Gastrocnemius medialis (tissue), 4 donors: ENCODE measurements at regions of chr16 and their contacts with region 1.

Region 1: DNA sequence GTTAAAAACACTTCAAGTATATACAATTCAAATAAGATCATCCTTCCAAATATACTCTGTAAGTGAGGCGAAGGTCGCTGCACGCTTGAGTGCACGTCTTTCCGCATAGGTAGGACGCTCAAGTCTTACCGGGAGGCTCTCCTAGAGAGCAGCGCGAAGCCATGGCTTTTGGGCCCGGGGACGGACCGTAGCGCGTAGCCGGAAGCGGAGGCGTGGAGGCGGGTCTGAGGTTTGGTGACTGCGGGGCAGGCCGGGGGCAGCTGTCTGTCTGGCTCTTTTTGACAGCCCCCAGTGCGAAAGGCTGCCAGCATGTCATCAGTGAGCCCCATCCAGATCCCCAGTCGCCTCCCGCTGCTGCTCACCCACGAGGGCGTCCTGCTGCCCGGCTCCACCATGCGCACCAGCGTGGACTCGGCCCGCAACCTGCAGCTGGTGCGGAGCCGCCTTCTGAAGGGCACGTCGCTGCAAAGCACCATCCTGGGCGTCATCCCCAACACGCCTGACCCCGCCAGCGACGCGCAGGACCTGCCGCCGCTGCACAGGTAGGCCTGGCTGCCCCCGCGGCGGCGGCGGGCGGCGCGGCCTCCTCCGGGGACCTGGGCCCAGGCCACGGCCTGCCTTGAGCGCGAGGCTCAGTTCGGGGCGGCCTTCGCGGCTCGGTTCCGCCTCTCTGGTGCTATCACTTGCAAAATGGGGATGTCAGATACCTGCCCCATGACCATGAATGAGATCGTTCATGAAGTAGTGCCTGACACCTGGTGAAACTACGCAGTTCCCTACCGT is at the start of gene LONP2:
- DNase-seq: peak; percentile 82 to 86
- ATAC-seq: peak; percentile 96 to 98
- H3K4me3 ChIP-seq: peak within 1 kb of the TSS; percentile 72 to 93 (median 92)
- H3K27ac ChIP-seq: peak within 1 kb of the TSS; percentile 80 to 95 (median 93)
- H3K4me1 ChIP-seq: peaks cover 28 to 36% of the 10 kb centered on the region in 2 donors
- H3K27me3 ChIP-seq: no peaks in the 10 kb centered on the region
- CTCF ChIP-seq: no peak
- POLR2A ChIP-seq: peak; percentile 50 to 69
- total RNA-seq, gene LONP2: 33.8 to 45.2 (median 42.4) TPM

Region 2: DNA sequence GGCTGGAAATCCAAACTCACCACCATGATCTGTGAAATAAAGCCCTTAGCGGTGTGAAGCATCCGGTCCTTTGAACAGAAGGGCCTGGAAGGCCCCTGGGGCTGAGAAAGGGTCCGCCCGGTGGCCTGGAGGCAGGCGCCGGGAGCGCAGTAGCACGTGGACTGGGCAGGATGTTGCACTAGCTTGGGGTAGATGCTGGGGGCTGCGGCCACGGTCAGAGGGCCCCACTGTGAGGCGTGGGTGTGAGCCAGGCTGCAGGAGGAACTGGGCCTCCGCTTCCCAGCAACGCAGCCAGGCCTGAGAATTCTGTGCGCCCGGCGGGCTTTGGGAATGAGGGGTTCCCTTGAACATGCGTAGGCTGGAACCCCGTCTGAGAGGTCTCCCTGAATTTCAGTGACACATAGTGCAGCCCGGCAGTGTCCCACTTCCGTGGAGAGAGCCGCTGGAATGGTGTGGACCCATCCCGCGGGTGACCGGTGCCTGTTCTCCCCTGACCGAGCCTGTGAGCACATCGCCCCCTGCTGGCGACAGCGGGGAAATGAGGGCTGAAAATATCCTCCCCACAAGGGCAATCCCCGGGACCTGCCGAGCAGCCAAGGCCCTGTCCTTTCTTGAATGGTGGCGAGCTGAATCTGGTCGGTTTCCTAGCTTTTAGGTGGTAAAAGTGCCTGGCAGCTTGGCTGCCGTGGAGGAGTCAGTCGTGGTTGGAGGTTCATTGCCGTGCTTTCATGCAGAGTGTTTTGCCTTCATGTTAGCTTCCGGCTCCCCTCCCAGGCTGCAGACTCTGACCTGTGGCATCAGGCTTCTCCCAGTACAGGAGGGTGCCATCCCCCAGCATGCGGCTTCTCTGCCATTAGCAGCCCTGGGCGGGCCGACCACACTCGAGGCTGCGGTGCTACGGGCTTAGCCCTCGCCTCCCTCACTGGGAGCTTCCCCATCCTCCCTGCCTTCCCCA is 1314.6 kb before region 1 on chr16:
- in situ Hi-C with region 1: no loop called
- intact Hi-C with region 1: loop called (anchors 10 kb)
- DNase-seq: peak; percentile 34 to 68
- ATAC-seq: peak; percentile 34 to 74
- H3K4me3 ChIP-seq: no peak overlapping the region
- H3K27ac ChIP-seq: peak overlapping the region in 3 of 4 donors; percentile 7 to 58 (median 35)
- H3K4me1 ChIP-seq: peaks cover 10 to 22% of the 10 kb centered on the region in 2 donors
- H3K27me3 ChIP-seq: no peaks in the 10 kb centered on the region
- CTCF ChIP-seq: peak; percentile 61 to 88 (median 83)
- POLR2A ChIP-seq: no peak

Region 3: GRCh38 chr16:48081656-48082055 is 162.6 kb before region 1 on chr16:
- in situ Hi-C with region 1: no loop called
- intact Hi-C with region 1: no loop called
- DNase-seq: no peak
- ATAC-seq: no peak
- H3K4me3 ChIP-seq: no peak overlapping the region
- H3K27ac ChIP-seq: no peak overlapping the region
- H3K4me1 ChIP-seq: peaks cover 14 to 15% of the 10 kb centered on the region in 2 donors
- H3K27me3 ChIP-seq: no peaks in the 10 kb centered on the region
- CTCF ChIP-seq: no peak
- POLR2A ChIP-seq: no peak

Region 4: GRCh38 chr16:48385272-48386150 is 141.2 kb after region 1 on chr16 and contains the start of gene SIAH1:
- in situ Hi-C with region 1: no loop called
- intact Hi-C with region 1: loop called (anchors 5 kb)
- DNase-seq: peak; percentile 69 to 82
- ATAC-seq: peak; percentile 76 to 78
- H3K4me3 ChIP-seq: peak within 1 kb of the TSS; percentile 77 to 89 (median 79)
- H3K27ac ChIP-seq: peak within 1 kb of the TSS; percentile 94 to 99 (median 98)
- H3K4me1 ChIP-seq: peaks cover 28 to 36% of the 10 kb centered on the region in 2 donors
- H3K27me3 ChIP-seq: no peaks in the 10 kb centered on the region
- CTCF ChIP-seq: peak in 2 of 5 experiments; percentile 6 to 16
- POLR2A ChIP-seq: peak; percentile 96 to 97
- total RNA-seq, gene SIAH1: 19.9 to 21.0 (median 20.1) TPM

Region 5: DNA sequence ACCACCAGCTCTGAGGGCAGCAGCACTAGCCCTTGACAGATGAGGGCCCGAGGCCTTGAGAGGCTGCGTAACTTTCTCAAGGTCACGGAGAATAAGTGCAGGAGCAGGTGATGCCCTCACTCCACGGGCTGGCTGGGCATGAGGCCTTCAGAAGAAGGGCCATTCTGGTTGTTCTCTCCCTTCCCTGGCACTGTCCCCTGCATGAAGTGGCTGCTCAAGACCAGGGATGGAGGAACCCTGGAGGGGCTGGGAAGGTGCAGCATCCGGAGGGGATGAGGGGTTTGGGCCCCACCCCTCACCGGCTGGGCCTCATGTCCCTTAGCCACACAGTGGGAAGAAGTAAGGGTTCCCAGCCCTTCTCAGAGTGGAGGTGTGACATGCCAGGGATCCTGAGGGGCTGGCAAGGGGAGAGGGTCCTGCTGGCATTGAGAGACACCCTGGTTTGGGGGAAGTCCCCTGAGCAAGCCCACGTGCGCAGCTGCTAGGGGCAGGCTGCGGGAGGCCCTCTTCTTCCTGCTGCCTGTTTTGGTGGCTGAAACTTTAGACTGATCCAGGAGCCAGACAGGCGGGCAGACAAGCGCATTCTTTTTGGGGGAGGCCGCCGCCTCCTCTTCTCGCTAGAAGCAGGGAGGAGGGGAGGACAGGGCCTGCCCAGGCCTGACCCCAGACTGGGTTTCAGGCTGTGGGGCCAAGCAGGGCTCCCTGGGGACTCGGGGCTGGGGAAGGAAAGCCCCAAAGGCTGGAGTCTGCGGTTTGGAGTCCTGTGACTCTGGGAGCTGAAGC is 291.8 kb after region 1 on chr16:
- in situ Hi-C with region 1: loop called in 1 of 4 experiments (anchors 25 kb)
- intact Hi-C with region 1: loop called (anchors 10 kb)
- DNase-seq: peak in 1 of 2 donors; percentile 78
- ATAC-seq: peak; percentile 50 to 63
- H3K4me3 ChIP-seq: no peak overlapping the region
- H3K27ac ChIP-seq: peak overlapping the region; percentile 62 to 83 (median 71)
- H3K4me1 ChIP-seq: peaks cover 45 to 50% of the 10 kb centered on the region in 2 donors
- H3K27me3 ChIP-seq: no peaks in the 10 kb centered on the region
- CTCF ChIP-seq: no peak
- POLR2A ChIP-seq: no peak

Region 6: DNA sequence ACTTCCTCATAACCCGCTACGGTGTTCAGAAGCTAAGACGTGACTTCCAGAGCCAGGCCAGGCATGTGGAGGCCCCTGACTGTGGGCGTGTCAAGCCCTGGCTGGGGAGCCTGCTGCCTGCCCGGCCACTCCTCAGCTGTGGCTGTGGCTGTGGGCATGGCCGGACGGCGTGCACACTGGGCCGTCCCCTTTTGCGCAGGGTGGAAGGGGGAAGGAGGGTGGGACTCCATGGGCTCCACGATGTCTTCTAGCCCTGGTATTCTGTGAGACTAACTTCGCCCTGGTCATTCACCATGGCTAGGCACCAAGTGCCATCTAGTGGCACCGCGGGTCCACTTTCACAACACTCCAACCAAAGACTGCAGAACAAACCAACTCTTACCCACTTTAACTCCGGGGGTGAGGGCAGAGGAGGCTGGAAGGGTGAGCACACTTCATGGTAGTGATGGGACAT is 297.8 kb after region 1 on chr16:
- in situ Hi-C with region 1: loop called in 1 of 4 experiments (anchors 25 kb)
- intact Hi-C with region 1: loop called (anchors 10 kb)
- DNase-seq: peak; percentile 32 to 62
- ATAC-seq: peak; percentile 71 to 83
- H3K4me3 ChIP-seq: no peak overlapping the region
- H3K27ac ChIP-seq: peak overlapping the region in 2 of 4 donors; percentile 23 to 40
- H3K4me1 ChIP-seq: peaks cover 22 to 38% of the 10 kb centered on the region in 2 donors
- H3K27me3 ChIP-seq: no peaks in the 10 kb centered on the region
- CTCF ChIP-seq: peak; percentile 44 to 66 (median 56)
- POLR2A ChIP-seq: no peak

Region 7: DNA sequence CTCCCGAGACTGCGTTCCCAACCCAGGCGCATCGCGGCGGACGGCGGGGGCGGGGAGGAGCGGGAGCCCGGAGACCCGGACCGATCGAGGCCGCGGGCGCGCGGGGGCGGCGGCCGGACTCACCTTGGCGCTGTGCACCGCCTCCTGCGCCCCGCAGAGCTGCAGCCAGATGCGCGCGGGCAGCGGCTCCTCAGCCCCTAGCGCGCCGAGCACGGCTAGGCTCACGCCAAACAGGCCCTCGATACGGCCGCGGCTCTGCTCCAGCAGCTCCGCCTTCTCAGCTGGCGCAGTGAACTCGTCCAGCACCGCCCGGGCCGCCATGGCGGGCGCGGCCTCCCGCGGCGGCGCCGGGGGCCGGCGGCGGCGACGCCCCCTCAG is 365.4 kb after region 1 on chr16:
- in situ Hi-C with region 1: no loop called
- intact Hi-C with region 1: loop called (anchors 5 kb)
- DNase-seq: peak in 1 of 2 donors; percentile 59
- ATAC-seq: peak; percentile 64 to 66
- H3K4me3 ChIP-seq: peak overlapping the region; percentile 73 to 94 (median 82)
- H3K27ac ChIP-seq: peak overlapping the region; percentile 88 to 93 (median 92)
- H3K4me1 ChIP-seq: peaks cover 34 to 40% of the 10 kb centered on the region in 2 donors
- H3K27me3 ChIP-seq: no peaks in the 10 kb centered on the region
- CTCF ChIP-seq: no peak
- POLR2A ChIP-seq: no peak